KBM-7 (cell line): ENCODE measurements at regions of chr11 and their contacts with region 1.

Region 1: GRCh38 chr11:44565211-44565952 is at the start of gene CD82:
- DNase-seq: peak; percentile 94

Region 2: GRCh38 chr11:44611687-44612434 is 46.5 kb after region 1 on chr11:
- in situ Hi-C with region 1: loop called (anchors 10 kb)
- DNase-seq: peak; percentile 44